Tibial artery (tissue), 4 donors: ENCODE measurements at regions of chr2 and their contacts with region 1.

Region 1: GRCh38 chr2:120223034-120223912 is at the start of gene TMEM185B:
- DNase-seq: peak; percentile 86 to 96
- H3K4me3 ChIP-seq: peak within 1 kb of the TSS; percentile 67 to 73
- H3K27ac ChIP-seq: peak within 1 kb of the TSS; percentile 82 to 83
- H3K4me1 ChIP-seq: peaks cover 0 to 29% (median 16%) of the 10 kb centered on the region in 4 donors
- H3K27me3 ChIP-seq: no peaks in the 10 kb centered on the region
- CTCF ChIP-seq: peak in 1 of 2 experiments; percentile 19

Region 2: GRCh38 chr2:120312861-120313694 is 89.8 kb after region 1 on chr2:
- intact Hi-C with region 1: loop called (anchors 10 kb)
- DNase-seq: peak; percentile 79 to 89
- H3K4me3 ChIP-seq: peak overlapping the region; percentile 46
- H3K27ac ChIP-seq: peak overlapping the region; percentile 18 to 52
- H3K4me1 ChIP-seq: peaks cover 0 to 12% (median 3%) of the 10 kb centered on the region in 4 donors
- H3K27me3 ChIP-seq: no peaks in the 10 kb centered on the region
- CTCF ChIP-seq: peak; percentile 83 to 86